Activated CD4-positive, alpha-beta memory T cell treated with anti-CD3 and anti-CD28 coated beads, Interleukin-2, amount 10 ng/mL, durations not matched to agents 7 days and 5 days (primary cell): ENCODE measurements at regions of chr5 and their contacts with region 1.

Region 1: DNA sequence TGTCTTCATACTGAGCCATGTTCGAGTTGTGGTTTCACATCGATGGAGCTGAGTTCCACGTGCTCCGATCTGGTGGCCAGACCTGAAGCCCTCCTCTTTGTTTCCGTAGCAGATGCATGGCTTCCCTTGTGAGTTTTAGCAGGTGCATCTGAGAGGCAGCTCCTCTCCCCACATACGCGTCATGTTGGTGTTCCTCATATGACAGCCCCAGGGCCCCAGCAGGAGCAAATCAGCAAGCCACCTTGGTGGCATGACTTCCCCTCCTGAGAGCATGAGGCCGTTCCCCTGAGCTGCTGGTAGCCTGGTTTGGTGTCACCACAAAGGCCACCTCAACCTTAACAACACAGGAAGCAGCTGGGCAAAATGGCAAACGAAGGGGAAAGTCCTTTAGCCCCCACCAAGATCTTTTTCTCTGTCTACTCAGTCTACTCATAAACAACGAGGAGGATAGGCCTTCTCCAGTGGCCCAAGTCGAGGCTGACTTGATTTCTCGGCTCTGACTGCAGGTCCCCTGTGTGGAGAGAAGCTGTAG is 5.9 kb downstream of the CYFIP2 start:
- DNase-seq: peak; percentile 94
- H3K4me3 Mint-ChIP-seq: peak overlapping the region; percentile 78
- H3K27ac Mint-ChIP-seq: peak overlapping the region; percentile 100
- H3K4me1 Mint-ChIP-seq: peaks cover 86% of the 10 kb centered on the region
- H3K27me3 Mint-ChIP-seq: no peaks in the 10 kb centered on the region

Region 2: GRCh38 chr5:157148734-157149615 is 122.8 kb before region 1 on chr5:
- CTCF ChIA-PET with region 1: interaction called, 8 read pairs
- POLR2A ChIA-PET with region 1: interaction called, 56 read pairs
- DNase-seq: peak; percentile 85
- H3K4me3 Mint-ChIP-seq: no peak overlapping the region
- H3K27ac Mint-ChIP-seq: peak overlapping the region; percentile 33
- H3K4me1 Mint-ChIP-seq: peaks cover 36% of the 10 kb centered on the region
- H3K27me3 Mint-ChIP-seq: no peaks in the 10 kb centered on the region

Region 3: GRCh38 chr5:157189223-157189622 is 82.6 kb before region 1 on chr5:
- CTCF ChIA-PET with region 1: interaction called, 5 read pairs
- POLR2A ChIA-PET with region 1: interaction called, 21 read pairs
- DNase-seq: no peak
- H3K4me3 Mint-ChIP-seq: peak overlapping the region; percentile 70
- H3K27ac Mint-ChIP-seq: peak overlapping the region; percentile 85
- H3K4me1 Mint-ChIP-seq: peaks cover 83% of the 10 kb centered on the region
- H3K27me3 Mint-ChIP-seq: no peaks in the 10 kb centered on the region

Region 4: DNA sequence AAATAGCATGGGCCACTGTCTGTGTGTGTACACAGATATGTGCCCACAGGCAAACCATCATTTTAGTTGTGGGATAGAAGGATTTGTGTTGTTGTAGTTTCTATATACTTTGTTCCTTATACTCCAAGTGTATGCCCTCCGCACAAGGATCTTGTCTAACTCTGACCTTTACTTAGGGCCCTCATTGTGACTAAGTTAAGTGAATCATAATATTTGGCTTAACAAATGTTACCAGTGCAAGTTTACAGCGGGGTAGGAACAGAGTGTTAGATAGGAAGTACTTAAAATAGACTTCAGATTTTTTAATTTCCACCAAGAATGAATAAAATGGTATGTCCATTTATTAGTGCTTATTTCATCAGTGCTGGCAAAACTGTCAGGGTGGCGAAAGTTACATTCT is 35.4 kb before region 1 on chr5:
- CTCF ChIA-PET with region 1: no interaction called
- POLR2A ChIA-PET with region 1: interaction called, 10 read pairs
- DNase-seq: no peak
- H3K4me3 Mint-ChIP-seq: no peak overlapping the region
- H3K27ac Mint-ChIP-seq: no peak overlapping the region
- H3K4me1 Mint-ChIP-seq: peaks cover 26% of the 10 kb centered on the region
- H3K27me3 Mint-ChIP-seq: no peaks in the 10 kb centered on the region

Region 5: GRCh38 chr5:157259699-157260098 is 12.1 kb before region 1 on chr5:
- CTCF ChIA-PET with region 1: interaction called, 24 read pairs
- POLR2A ChIA-PET with region 1: interaction called, 145 read pairs
- DNase-seq: no peak
- H3K4me3 Mint-ChIP-seq: no peak overlapping the region
- H3K27ac Mint-ChIP-seq: no peak overlapping the region
- H3K4me1 Mint-ChIP-seq: peaks cover 73% of the 10 kb centered on the region
- H3K27me3 Mint-ChIP-seq: no peaks in the 10 kb centered on the region

Region 6: DNA sequence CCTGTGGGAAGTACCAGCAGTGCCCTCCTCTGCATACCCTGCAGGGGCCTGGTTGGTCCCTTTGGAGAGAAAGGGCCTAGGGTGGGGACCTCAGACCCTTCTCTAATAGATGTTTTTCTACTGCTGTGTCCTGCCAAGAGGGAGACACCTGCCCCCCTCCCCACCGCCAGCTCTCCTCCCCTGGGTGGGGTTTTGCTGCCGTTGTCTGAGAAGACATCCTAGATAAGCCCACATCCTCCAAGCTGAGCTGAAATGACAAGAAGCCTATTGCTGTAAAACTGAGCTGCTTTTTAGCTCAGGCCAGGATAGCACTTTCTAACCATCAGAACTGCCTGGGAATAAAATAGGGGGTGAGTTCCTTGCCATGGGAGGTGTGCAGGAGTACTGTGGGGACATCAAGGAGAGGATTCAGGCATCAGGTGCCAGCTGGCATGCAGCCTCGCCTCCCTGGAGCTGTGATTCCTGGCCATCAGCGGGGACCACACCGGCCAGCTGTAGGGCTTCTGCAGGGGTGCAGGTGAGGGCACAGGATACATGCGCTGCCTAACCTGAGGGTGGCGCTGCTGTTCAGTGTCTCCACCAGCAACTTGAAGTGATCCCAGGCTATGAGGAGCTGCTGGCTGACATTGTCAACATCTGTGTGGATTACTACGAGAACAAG is 32.0 kb after region 1 on chr5:
- CTCF ChIA-PET with region 1: interaction called, 27 read pairs
- POLR2A ChIA-PET with region 1: interaction called, 36 read pairs
- DNase-seq: peak; percentile 65
- H3K4me3 Mint-ChIP-seq: peak overlapping the region; percentile 60
- H3K27ac Mint-ChIP-seq: peak overlapping the region; percentile 93
- H3K4me1 Mint-ChIP-seq: peaks cover 64% of the 10 kb centered on the region
- H3K27me3 Mint-ChIP-seq: no peaks in the 10 kb centered on the region